ENCODE measurements at regions of chr19 and their contacts with region 1.

Region 1: DNA sequence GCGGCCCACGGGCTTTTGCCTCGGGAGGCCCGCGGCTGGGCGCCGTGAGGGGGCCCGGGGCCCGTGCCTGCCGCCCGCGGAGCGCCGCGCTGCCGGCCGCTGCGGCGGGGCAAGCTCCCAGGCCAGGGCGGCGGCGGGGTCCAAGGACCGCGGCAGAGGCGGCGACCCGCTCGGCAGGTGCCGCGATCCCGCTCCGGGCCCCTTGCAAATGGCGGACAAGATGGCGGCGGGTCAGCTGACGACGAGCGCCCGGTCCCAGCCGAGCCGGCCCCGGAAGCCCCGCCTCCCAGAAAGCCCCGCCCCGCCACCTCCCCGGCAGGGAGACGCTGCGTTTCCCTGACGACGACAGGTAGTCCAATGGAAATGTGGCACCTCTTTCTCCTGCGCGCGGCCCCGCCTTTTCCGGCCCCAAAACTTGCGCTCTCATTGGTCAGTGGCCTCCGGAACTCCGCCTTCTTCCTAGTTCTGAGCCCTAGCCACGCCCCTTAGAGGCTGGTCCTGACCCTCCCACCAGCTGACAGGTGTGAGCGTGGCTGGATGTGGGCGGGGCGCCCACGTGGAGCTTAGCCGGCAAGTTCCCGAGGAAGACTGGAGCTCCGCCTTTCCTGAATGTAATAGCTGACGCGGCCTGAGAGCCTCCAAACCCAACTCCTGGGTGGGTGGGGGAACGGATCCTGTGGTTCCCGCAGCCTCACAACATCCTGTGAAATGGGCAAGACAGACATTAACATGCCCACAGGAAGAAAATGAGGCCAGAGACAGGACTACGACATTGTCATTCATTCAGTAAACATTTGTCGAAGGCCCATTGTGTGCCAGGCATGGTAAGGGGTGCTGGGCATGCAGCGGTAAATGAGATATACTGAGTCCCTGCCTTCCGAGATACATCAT is at the start of gene AP3D1:
- DNase-seq: peak; percentile 99
- ATAC-seq: peak; percentile 85
- H3K4me3 ChIP-seq: peak within 1 kb of the TSS; percentile 96 to 100
- H3K27ac ChIP-seq: peak within 1 kb of the TSS; percentile 84
- H3K4me1 ChIP-seq: peaks cover 41 to 58% of the 10 kb centered on the region in 2 experiments
- H3K27me3 ChIP-seq: no peaks in the 10 kb centered on the region
- CTCF ChIP-seq: no peak
- POLR2A ChIP-seq: no peak
- RAD21 ChIP-seq: no peak
- total RNA-seq, gene AP3D1: 137 TPM

Region 2: GRCh38 chr19:2016041-2016807 is 135.4 kb before region 1 on chr19:
- CTCF ChIA-PET with region 1: no interaction called
- POLR2A ChIA-PET with region 1: no interaction called
- RAD21 ChIA-PET with region 1: interaction called in 1 of 2 experiments, 4 read pairs
- intact Hi-C with region 1: loop called (anchors 5 kb)
- DNase-seq: peak; percentile 73
- ATAC-seq: peak; percentile 79
- H3K4me3 ChIP-seq: peak overlapping the region; percentile 34 to 37; a peak in 3 of 4 replicates
- H3K27ac ChIP-seq: peak overlapping the region; percentile 64
- H3K4me1 ChIP-seq: peaks cover 7 to 22% of the 10 kb centered on the region in 2 experiments; a peak in 3 of 4 replicates
- H3K27me3 ChIP-seq: no peaks in the 10 kb centered on the region
- CTCF ChIP-seq: no peak
- POLR2A ChIP-seq: no peak
- RAD21 ChIP-seq: no peak

Region 3: GRCh38 chr19:2221918-2222317 is 70.3 kb after region 1 on chr19:
- CTCF ChIA-PET with region 1: interaction called, 21 read pairs
- POLR2A ChIA-PET with region 1: no interaction called
- RAD21 ChIA-PET with region 1: interaction called in 1 of 2 experiments, 4 read pairs
- intact Hi-C with region 1: no loop called
- DNase-seq: no peak
- ATAC-seq: peak; percentile 37; the same call in 1 of the 2 replicates
- H3K4me3 ChIP-seq: no peak overlapping the region
- H3K27ac ChIP-seq: no peak overlapping the region
- H3K4me1 ChIP-seq: no peaks in the 10 kb centered on the region
- H3K27me3 ChIP-seq: no peaks in the 10 kb centered on the region
- CTCF ChIP-seq: peak in 2 of 3 experiments; percentile 23 to 34; a peak in 2 of 6 replicates
- POLR2A ChIP-seq: no peak
- RAD21 ChIP-seq: peak; percentile 30; the same call in 1 of the 2 replicates

Region 4: GRCh38 chr19:2243274-2244124 is 91.9 kb after region 1 on chr19:
- CTCF ChIA-PET with region 1: no interaction called
- POLR2A ChIA-PET with region 1: no interaction called
- RAD21 ChIA-PET with region 1: no interaction called
- intact Hi-C with region 1: no loop called
- DNase-seq: no peak
- ATAC-seq: no peak
- H3K4me3 ChIP-seq: no peak overlapping the region
- H3K27ac ChIP-seq: no peak overlapping the region; the same call in 1 of the 2 replicates
- H3K4me1 ChIP-seq: peaks cover 6 to 26% of the 10 kb centered on the region in 2 experiments; a peak in 3 of 4 replicates
- H3K27me3 ChIP-seq: no peaks in the 10 kb centered on the region
- CTCF ChIP-seq: no peak
- POLR2A ChIP-seq: no peak
- RAD21 ChIP-seq: no peak

Region 5: GRCh38 chr19:2385053-2385721 is 233.6 kb after region 1 on chr19:
- CTCF ChIA-PET with region 1: interaction called, 5 read pairs
- POLR2A ChIA-PET with region 1: no interaction called
- RAD21 ChIA-PET with region 1: no interaction called
- intact Hi-C with region 1: loop called (anchors 10 kb)
- DNase-seq: peak; percentile 97
- ATAC-seq: peak; percentile 94
- H3K4me3 ChIP-seq: peak overlapping the region; percentile 30 to 40
- H3K27ac ChIP-seq: peak overlapping the region; percentile 81
- H3K4me1 ChIP-seq: peaks cover 18 to 32% of the 10 kb centered on the region in 2 experiments
- H3K27me3 ChIP-seq: no peaks in the 10 kb centered on the region
- CTCF ChIP-seq: no peak
- POLR2A ChIP-seq: peak; percentile 44
- RAD21 ChIP-seq: no peak